Ovary (tissue), 10 donors: ENCODE measurements at regions of chr3 and their contacts with region 1.

Region 1: GRCh38 chr3:124032648-124033359 is 40.9 kb upstream of the ROPN1 start:
- DNase-seq: peak; percentile 83 to 92 (median 88)
- H3K4me3 ChIP-seq: peak overlapping the region; percentile 70
- H3K27ac ChIP-seq: peak overlapping the region; percentile 47 to 56
- H3K4me1 ChIP-seq: no peaks in the 10 kb centered on the region
- H3K27me3 ChIP-seq: no peaks in the 10 kb centered on the region
- CTCF ChIP-seq: peak; percentile 49 to 65 (median 64)
- EP300 ChIP-seq: no peak
- POLR2A ChIP-seq: no peak

Region 2: GRCh38 chr3:124078953-124079911 is 46.4 kb after region 1 on chr3:
- intact Hi-C with region 1: loop called in 1 of 4 experiments (anchors 5 kb)
- DNase-seq: peak in 1 of 5 donors; percentile 22
- H3K4me3 ChIP-seq: no peak overlapping the region
- H3K27ac ChIP-seq: no peak overlapping the region
- H3K4me1 ChIP-seq: peaks cover 2% of the 10 kb centered on the region
- H3K27me3 ChIP-seq: no peaks in the 10 kb centered on the region
- CTCF ChIP-seq: peak; percentile 27 to 79 (median 57)
- EP300 ChIP-seq: no peak
- POLR2A ChIP-seq: no peak

Region 3: DNA sequence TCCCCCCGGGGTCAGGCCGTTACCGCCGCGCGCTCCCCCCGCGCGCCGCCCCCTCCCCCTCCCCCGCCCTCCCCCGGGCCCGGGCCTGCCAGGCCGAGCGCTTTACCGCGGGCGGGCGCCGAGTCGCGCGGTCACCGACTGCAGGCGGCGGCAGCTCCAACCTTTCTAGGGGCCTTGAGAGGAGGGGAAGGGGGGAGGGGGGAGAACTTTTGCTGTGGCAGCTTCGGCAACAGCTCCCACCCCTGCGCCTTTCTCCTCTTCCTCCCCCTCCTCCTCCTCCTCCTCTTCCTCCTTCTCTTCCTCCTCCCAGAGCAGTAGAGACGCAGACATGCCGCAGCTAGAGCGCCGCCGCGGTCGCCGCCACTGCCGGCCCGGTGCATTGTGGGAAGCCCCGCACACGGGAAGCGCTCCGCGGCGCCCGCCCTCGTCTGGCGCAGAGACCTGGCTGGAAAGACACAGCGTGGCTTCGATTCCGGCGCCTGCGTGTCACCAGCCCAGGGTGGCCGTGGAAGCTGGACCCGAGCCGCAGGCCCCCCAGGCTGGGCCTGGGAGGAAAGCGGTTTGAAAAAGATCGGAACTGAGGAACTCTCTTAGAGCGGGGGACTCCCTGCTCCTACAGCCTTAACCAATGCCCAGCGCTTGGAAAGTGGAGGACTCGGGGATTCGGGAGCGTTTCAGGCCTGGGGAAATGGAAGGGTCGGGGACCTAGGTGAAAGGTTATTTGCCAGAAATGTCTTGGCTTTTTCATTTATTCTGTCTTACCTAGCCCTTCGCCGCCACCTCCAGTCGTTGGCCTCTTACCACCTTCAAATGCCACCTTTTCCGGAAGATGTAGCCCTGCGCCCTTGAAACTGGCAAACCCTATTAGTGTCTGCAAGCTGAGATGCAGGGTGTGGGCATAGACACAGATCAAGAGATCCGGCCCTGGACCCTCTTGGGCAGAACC is 1342.5 kb after region 1 on chr3 and contains the start of gene ZNF148:
- intact Hi-C with region 1: loop called in 1 of 4 experiments (anchors 10 kb)
- DNase-seq: peak; percentile 85 to 93 (median 90)
- H3K4me3 ChIP-seq: peak within 1 kb of the TSS; percentile 55
- H3K27ac ChIP-seq: peak within 1 kb of the TSS; percentile 45 to 85
- H3K4me1 ChIP-seq: peaks cover 6% of the 10 kb centered on the region
- H3K27me3 ChIP-seq: no peaks in the 10 kb centered on the region
- CTCF ChIP-seq: no peak
- EP300 ChIP-seq: no peak
- POLR2A ChIP-seq: peak; percentile 71
- total RNA-seq, gene ZNF148: 22.2 to 98.8 (median 67.4) TPM